ENCODE measurements at regions of chr13 and their contacts with region 1.

Region 1: DNA sequence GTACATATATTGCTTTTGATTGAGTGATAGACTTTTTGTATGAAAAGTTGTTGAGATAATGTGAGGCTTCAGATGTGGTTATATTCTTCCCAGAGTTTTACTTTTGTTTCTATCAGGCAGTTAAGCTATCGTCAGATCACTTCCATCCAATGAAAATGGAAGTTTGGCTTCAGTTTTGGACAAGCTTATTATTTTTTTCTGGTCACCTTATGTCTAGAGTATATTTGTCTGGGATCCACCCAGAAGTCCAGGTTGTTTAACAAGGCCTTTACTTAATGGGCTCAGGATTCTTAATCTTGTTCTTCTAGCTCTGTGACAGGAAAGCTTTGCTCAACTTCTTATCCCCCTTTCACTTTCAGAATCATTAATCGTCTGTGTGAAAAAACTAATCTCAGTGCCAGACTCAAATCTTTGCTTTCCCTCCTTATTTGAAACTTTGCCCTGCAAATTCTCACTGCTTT is 150.9 kb downstream of the PDS5B start:
- DNase-seq: no peak
- H3K4me3 Mint-ChIP-seq: peak overlapping the region; percentile 73
- H3K27ac Mint-ChIP-seq: peak overlapping the region; percentile 82
- H3K4me1 Mint-ChIP-seq: peaks cover 26% of the 10 kb centered on the region
- H3K27me3 Mint-ChIP-seq: no peaks in the 10 kb centered on the region

Region 2: DNA sequence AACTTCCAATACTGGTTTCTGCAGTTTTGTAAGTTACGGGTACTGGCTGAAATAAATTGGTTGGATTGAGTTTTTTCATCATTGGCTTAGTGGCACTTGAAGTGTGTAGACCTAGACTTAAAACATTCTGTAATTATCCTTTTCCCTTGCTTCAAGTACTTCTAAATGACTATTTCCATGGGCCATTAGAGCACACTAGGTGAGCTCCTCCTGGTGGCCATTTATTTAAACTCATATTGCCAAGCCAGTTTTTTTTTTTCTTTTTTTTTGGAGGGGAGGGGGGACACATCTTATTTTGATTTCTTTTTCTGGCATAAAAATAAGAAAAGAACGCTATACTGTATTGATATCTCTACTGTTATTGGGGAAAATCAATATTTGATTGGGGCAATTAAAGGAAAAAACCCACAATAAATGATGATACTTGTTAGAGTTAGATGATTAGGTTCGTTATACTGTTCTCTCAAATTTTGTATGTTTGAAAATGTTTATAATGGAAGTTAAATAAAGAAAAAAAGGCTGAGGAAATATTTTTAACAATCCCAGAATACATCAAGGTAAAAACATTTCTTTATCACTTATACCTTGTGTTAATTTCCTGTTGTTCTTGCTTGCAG is 68.0 kb before region 1 on chr13:
- CTCF ChIA-PET with region 1: interaction called, 10 read pairs
- POLR2A ChIA-PET with region 1: no interaction called
- DNase-seq: no peak
- H3K4me3 Mint-ChIP-seq: no peak overlapping the region
- H3K27ac Mint-ChIP-seq: no peak overlapping the region
- H3K4me1 Mint-ChIP-seq: peaks cover 2% of the 10 kb centered on the region
- H3K27me3 Mint-ChIP-seq: no peaks in the 10 kb centered on the region